Psoas muscle (tissue), 8 donors: ENCODE measurements at regions of chr2 and their contacts with region 1.

Region 1: DNA sequence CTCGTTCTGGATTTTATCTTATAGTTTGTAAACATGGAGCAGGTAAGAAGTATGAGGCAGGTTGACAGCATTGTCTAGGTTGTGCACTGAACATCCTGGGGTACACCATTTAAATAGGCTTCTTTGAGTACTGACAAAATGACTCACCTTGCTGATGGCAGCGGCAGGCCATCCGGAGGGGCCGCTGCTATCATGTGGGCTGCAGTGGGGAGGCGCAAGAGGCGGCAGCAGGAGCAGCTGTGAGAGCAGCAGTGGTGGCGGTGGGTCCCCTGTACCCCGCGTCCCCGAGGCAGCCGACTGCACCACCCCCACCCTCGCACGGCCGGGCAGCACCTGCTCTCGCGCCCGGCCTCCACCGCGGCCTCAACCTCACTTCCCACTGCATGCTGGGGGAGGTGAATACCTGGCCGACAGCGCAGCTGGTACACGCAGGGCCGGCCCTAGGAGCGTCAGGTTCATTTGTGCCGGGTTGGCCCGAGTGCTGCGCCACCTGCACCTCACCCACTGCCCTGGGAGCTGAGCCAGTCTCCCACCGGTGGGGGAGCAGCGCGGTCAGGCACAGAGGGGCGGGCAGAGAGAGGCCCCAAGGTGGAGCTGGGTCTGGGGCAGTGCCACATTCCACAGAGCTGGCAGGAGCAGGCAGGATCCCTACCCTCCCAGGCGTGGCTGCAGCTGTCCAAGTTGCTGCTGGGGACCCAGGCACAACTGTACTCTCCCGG is 154.5 kb upstream of the RBMS1 start:
- DNase-seq: no peak
- ATAC-seq: peak in 3 of 4 donors; percentile 15 to 28 (median 25)
- H3K4me3 ChIP-seq: no peak overlapping the region
- H3K27ac ChIP-seq: no peak overlapping the region
- H3K4me1 ChIP-seq: no peaks in the 10 kb centered on the region
- H3K27me3 ChIP-seq: no peaks in the 10 kb centered on the region
- CTCF ChIP-seq: no peak

Region 2: DNA sequence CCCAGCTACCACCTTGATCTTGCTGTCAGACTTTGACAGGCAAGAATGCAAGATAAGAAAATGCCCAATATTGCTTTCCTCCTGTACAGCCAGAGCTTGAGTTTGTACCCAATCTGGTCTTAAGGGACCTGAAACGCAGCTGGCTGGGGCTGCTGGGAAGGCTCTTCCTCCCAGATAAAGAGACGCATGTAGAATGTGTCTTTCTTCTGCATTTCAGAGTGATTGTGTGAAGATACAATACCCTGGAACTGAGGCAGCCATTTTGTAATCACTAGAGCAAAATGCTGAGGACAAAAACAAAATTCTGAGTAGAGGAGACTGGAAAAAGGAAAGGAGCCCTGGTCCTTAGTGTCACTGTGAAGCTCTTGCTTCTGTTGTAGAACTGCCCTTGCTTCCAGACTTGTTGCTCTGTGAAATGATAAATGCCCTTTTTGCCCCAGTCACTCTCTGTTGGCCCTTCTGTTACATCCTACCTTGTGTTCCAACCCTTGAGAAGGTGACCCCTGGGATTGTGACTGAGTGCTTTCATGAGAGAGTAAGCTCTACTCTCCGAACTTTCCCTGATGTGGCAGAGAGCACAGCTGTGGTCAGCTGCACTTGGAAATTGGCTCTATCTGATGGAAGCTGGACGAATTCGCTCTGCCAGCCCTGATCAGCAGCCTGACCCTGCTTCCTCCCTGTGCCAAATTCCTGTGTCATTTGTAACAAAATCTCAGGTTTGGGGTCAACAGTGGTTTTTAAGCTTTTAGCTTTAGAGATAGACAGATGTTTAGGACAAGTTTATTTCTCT is 17.1 kb before region 1 on chr2:
- intact Hi-C with region 1: no loop called
- DNase-seq: no peak
- ATAC-seq: peak in 1 of 4 donors; percentile 49
- H3K4me3 ChIP-seq: no peak overlapping the region
- H3K27ac ChIP-seq: no peak overlapping the region
- H3K4me1 ChIP-seq: peaks cover 6% of the 10 kb centered on the region
- H3K27me3 ChIP-seq: peaks cover 0 to 2% (median 0%) of the 10 kb centered on the region in 3 donors
- CTCF ChIP-seq: no peak

Region 3: DNA sequence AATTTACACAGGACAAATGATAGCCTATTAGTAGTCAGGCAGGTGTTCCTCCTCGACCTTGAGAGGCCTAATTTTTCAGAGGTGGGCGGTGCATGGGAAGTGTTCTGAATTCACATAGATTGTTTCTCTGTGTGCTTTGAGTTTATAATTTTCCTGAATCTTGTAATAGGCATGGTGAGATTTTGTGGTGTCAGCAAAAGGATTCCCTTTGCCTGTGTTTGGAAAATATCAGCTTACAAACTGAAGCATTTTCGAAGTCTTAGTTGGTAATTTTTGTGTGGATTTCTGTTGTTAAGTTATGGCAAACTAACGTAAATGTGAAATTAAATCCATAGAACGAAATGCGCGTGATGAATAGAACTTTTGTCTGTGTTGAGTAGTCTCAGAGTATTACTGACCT is 39.5 kb after region 1 on chr2:
- intact Hi-C with region 1: loop called in 1 of 2 experiments (anchors 2 kb)
- DNase-seq: no peak
- ATAC-seq: no peak
- H3K4me3 ChIP-seq: no peak overlapping the region
- H3K27ac ChIP-seq: no peak overlapping the region
- H3K4me1 ChIP-seq: no peaks in the 10 kb centered on the region
- H3K27me3 ChIP-seq: no peaks in the 10 kb centered on the region
- CTCF ChIP-seq: no peak